Activated T-helper 1 cell treated with anti-CD3 and anti-CD28 coated beads, Interleukin-12 subunit alpha, Interleukin-12 subunit beta, Interleukin-2, Interleukin-4 antibody, amounts not matched to agents 30 ng/mL and 10 ng/mL and 1 ng/mL, durations not matched to agents 14 hours and 24 hours and 36 hours (primary cell): ENCODE measurements at regions of chr3 and their contacts with region 1.

Region 1: DNA sequence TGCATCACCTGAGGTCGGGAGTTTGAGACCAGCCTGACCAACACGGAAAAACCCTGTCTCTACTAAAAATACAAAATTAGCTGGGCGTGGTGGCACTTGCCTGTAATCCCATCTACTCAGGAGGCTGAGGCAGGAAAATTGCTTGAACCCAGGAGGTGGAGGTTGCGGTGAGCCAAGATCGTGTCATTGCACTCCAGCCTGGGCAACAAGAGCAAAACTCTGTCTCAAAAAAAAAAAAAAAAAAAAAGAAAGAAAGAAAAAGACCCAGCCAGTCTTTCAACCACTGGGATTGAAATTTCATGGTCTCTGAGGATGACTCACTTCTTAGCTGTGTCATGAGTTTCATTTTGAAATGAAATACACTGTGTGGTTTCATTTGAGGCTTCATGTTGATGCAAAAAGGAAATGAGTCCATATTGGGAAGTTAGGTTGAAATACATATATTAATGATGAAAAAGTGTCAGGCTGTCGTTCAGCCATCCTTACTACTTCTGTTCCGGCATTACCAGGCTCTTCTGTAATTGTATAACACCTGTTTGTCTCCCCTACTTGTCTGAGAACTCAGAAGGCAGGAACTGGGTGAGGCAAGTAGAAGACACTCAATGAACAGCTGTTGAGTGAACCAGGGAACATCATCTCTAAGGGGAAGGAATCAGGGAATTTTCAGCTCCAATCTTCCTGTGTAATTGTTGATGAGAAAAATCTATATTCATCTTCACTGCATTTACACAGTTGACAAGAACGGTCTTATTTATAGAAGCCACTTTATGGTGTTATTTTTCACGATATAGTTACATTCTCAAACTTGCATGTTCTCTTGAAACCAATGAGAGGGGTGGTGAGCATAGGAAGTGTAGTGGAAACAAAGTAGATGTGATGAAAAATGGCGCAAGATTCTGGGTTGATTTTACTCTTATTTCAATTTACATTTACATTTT is 87.4 kb downstream of the NFKBIZ start:
- DNase-seq: peak; percentile 33
- H3K4me3 Mint-ChIP-seq: peak overlapping the region; percentile 65
- H3K27ac Mint-ChIP-seq: peak overlapping the region; percentile 77
- H3K4me1 Mint-ChIP-seq: peaks cover 33% of the 10 kb centered on the region
- H3K27me3 Mint-ChIP-seq: peaks cover 12% of the 10 kb centered on the region

Region 2: DNA sequence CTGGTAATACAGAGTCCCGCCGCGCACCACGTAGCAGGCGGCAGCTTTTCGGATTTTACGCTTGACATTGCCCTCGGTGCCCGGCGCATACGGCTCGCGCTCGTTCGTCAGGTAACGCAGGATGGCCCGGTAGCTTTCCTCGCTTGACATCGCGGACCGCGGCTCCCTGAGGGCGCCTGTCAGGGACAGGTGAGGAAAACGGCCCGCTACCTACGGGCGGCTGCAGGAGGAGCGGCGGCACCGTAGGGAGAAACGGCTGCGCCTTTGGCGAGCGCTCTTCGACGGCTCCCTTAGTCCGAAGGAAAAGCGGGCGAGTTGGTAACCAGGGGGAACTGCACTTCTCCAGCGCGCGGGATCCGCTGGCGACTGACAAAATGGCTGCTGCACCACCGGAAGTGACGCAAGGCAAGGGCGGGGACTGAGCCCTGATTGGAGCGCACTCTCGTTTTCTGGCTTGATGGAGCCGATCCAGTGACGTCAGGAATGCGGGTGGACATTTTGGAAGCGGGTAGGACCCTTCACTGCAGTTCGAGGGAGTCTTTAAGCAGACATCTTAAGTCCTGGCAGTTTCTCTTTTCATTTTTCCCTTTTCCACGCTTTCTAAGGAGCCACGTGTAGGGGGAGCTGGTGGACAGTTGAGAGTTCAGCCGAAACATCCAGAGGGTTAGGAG is 259.8 kb before region 1 on chr3 and contains the start of gene ZBTB11:
- intact Hi-C with region 1: loop called (anchors 5 kb)
- DNase-seq: peak; percentile 99
- H3K4me3 Mint-ChIP-seq: peak within 1 kb of the TSS; percentile 96
- H3K27ac Mint-ChIP-seq: peak within 1 kb of the TSS; percentile 97
- H3K4me1 Mint-ChIP-seq: peaks cover 56% of the 10 kb centered on the region
- H3K27me3 Mint-ChIP-seq: no peaks in the 10 kb centered on the region
- total RNA-seq, gene ZBTB11: 29.0 and 31.9 TPM in 2 replicates

Region 3: GRCh38 chr3:101821503-101821902 is 115.2 kb before region 1 on chr3:
- intact Hi-C with region 1: no loop called
- DNase-seq: no peak
- H3K4me3 Mint-ChIP-seq: no peak overlapping the region
- H3K27ac Mint-ChIP-seq: no peak overlapping the region
- H3K4me1 Mint-ChIP-seq: peaks cover 48% of the 10 kb centered on the region
- H3K27me3 Mint-ChIP-seq: no peaks in the 10 kb centered on the region

Region 4: DNA sequence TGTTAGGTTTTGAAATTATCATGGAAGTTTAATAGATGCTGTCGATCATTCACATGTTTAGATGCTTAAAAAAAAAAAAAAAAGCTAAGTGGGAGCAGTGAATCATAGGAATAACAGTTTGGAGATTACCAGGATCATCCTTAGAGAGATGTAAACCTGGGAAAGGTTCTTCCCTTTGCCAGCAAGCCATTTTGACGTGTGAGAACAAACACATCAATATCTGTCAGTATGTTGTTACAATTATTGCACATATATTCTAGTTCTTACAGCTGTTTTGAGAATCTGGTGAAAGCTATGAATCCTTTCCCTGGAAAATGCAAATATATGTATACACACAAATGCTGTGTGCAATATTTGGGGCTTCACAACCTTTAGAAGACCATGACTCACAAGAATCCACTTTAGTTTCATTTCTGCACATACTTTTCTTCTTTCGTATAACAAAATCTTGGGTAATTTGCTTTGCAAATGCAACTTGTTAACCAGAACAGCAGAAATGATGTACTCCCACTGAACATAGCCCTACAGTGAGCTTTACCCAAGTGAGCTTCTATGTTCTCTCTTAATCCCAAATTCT is 75.4 kb before region 1 on chr3:
- intact Hi-C with region 1: loop called (anchors 1 kb)
- DNase-seq: no peak
- H3K4me3 Mint-ChIP-seq: no peak overlapping the region
- H3K27ac Mint-ChIP-seq: peak overlapping the region; percentile 34
- H3K4me1 Mint-ChIP-seq: peaks cover 67% of the 10 kb centered on the region
- H3K27me3 Mint-ChIP-seq: no peaks in the 10 kb centered on the region

Region 5: DNA sequence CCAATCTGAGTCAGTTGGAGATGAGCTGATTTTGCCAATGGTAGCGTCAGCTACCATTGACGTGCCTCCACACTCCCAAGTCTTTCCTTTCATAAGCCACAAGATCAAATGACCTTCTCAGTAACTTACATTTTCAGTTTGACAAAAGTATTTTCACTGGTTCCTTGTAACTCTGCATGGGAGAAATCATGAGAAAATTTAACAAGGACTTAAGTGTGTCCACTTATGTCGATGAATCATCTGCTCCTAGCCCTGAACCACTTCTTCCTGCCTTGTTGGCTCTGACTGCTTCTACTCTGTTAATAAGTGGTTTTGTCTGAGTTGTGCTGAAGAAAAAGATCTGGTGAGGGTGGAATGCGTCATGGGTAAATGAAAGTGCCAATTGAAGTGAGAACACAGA is 13.8 kb after region 1 on chr3:
- intact Hi-C with region 1: loop called (anchors 1 kb)
- DNase-seq: no peak
- H3K4me3 Mint-ChIP-seq: no peak overlapping the region
- H3K27ac Mint-ChIP-seq: peak overlapping the region; percentile 1
- H3K4me1 Mint-ChIP-seq: peaks cover 27% of the 10 kb centered on the region
- H3K27me3 Mint-ChIP-seq: peaks cover 2% of the 10 kb centered on the region

Region 6: DNA sequence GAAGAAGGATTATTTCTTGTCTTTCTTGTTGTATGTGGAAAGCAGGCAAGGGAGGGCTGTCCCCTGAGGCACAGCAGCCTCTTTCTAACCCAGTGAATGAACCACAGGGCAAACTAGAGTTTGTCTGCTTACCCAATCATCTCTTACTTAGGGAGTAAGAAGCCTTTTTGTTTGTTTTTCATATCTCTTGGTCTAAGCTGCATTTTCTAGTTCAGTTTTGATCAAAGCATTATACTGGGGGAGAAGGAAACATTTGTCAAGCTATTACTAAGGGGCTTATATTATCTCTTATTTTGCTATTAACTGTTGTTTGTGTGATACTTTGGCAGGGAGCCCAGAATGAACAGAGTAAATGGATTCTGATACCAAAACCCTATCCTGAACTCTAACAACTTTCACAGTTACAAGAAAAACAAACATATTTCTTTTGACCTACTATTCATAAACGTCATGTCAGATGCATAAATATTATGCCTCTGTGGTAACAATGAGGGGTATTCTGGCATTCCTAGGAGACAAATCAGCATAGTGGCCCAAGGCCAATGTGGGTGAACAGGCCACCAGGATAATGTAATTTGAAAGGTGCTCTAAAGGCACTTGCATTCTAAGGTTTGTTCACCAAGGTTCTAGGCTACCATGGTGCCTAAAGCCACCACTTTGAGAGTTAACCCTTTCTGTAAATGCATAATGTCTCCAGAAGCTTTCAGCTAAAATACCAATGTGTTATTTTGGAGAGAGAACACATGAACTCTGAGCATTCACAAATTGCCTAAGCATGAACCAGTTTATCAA is 226.5 kb after region 1 on chr3:
- intact Hi-C with region 1: loop called (anchors 5 kb)
- DNase-seq: no peak
- H3K4me3 Mint-ChIP-seq: no peak overlapping the region
- H3K27ac Mint-ChIP-seq: no peak overlapping the region
- H3K4me1 Mint-ChIP-seq: peaks cover 17% of the 10 kb centered on the region
- H3K27me3 Mint-ChIP-seq: no peaks in the 10 kb centered on the region